ENCODE measurements at regions of chr22 and their contacts with region 1.

Region 1: GRCh38 chr22:40346178-40347118 is at the start of gene ADSL:
- DNase-seq: peak; percentile 46
- H3K4me3 ChIP-seq: peak within 1 kb of the TSS; percentile 50 to 85 (median 66)
- H3K27ac ChIP-seq: peak within 1 kb of the TSS; percentile 79 to 92 (median 87)
- H3K4me1 ChIP-seq: peaks cover 15 to 36% (median 20%) of the 10 kb centered on the region in 3 donors
- H3K27me3 ChIP-seq: no peaks in the 10 kb centered on the region
- CTCF ChIP-seq: peak in 3 of 6 experiments; percentile 13 to 23 (median 16)
- POLR2A ChIP-seq: peak in 3 of 4 donors; percentile 5 to 83 (median 82)
- total RNA-seq, gene ADSL: 32.0 to 98.1 (median 77.8) TPM

Region 2: DNA sequence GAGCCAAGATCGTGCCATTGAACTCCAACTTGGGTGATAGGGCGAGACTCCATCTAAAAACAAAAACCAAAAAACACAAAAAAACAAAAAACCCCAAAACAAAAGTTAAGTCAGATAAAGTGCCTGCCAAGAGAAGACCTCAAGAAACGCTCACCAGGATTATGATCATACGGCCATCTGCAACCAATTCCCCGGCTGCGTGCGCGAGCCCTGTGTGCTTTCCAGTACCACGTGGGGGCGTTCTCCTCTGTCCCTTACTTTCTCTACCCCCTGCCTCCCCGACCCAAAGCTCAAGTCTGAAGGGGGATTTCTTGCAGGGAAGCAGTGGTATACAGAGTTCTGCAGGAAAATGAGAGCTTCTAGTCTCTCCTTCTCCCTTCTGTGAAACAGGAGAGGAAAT is 803.4 kb before region 1 on chr22:
- intact Hi-C with region 1: loop called (anchors 10 kb)
- DNase-seq: no peak
- H3K4me3 ChIP-seq: no peak overlapping the region
- H3K27ac ChIP-seq: no peak overlapping the region
- H3K4me1 ChIP-seq: no peaks in the 10 kb centered on the region
- H3K27me3 ChIP-seq: peaks cover 0 to 62% (median 0%) of the 10 kb centered on the region in 4 donors
- CTCF ChIP-seq: peak in 3 of 6 experiments; percentile 15 to 29 (median 29)
- POLR2A ChIP-seq: no peak

Region 3: DNA sequence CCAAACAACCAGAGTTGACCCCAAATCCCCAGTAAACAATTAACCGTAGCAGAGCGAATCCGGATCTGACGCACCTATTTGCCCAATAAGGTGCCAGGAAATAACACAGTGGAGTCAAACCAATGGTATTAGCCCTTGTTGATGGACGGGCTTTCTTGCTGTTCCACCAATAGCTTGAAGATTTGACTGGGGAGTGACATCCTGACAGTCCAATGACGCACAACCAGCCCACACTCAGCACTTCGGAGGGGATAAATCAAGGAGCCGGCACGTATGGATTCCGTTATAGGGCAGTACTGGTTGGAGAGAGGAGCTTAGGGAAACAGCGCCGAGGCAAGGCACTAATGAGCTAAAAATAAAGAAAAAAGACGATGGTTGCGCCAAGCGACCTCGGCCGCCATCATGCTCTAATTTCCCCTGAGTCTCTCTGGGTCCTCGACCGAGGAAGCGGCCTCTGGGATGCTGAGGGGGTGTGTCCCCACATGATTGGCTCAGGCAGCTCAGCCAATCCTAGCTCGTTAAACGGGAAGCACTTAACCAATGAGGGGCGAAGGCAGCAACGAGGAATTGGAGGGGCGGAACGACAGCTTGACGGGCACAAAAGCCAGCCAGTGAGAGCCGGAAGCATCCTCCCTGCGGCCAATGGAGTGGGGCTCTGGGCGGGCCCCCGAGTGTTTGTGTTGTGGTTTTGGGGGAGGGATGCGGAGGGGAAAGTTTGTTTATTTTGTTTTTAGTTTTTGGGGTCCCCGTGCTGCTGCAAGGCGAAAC is 302.2 kb before region 1 on chr22:
- intact Hi-C with region 1: loop called (anchors 5 kb)
- DNase-seq: peak; percentile 93
- H3K4me3 ChIP-seq: peak overlapping the region; percentile 67 to 87 (median 84)
- H3K27ac ChIP-seq: peak overlapping the region; percentile 87 to 98 (median 96)
- H3K4me1 ChIP-seq: peaks cover 30 to 75% (median 48%) of the 10 kb centered on the region in 3 donors
- H3K27me3 ChIP-seq: no peaks in the 10 kb centered on the region
- CTCF ChIP-seq: peak in 1 of 6 experiments; percentile 5
- POLR2A ChIP-seq: peak in 3 of 4 donors; percentile 40 to 78 (median 73)

Region 4: DNA sequence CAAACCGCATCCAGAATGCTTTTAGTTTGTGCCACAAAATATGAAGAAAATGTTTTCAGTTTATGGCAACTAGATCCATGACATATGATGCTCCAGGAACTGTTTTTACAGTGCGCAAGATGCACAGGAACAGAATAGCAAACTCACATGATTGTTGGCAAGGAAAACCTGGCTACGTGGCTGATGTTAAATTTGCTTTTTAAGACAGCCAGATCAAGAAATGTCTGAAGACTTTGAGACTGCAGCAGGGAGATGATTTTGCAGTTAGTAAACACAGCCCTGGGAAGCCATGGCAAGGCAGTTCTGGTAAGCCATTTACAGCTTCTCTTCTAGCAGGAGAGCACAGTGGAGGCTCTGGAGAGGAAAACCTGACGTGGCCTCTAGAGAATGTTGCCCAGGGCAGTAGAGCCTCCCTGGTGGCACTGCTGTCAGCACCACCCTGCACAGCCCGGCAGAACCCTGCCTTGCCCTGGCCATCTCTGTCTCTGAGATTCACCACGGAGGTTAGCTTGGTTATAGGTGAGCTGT is 238.5 kb before region 1 on chr22:
- intact Hi-C with region 1: no loop called
- DNase-seq: no peak
- H3K4me3 ChIP-seq: peak overlapping the region in 3 of 4 donors; percentile 25 to 49 (median 27)
- H3K27ac ChIP-seq: peak overlapping the region in 3 of 4 donors; percentile 25 to 62 (median 55)
- H3K4me1 ChIP-seq: peaks cover 5 to 31% (median 14%) of the 10 kb centered on the region in 3 donors
- H3K27me3 ChIP-seq: no peaks in the 10 kb centered on the region
- CTCF ChIP-seq: no peak
- POLR2A ChIP-seq: no peak

Region 5: GRCh38 chr22:40238425-40239344 is 107.8 kb before region 1 on chr22:
- intact Hi-C with region 1: no loop called
- DNase-seq: no peak
- H3K4me3 ChIP-seq: peak overlapping the region in 1 of 4 donors; percentile 1
- H3K27ac ChIP-seq: peak overlapping the region; percentile 51 to 72 (median 67)
- H3K4me1 ChIP-seq: peaks cover 26 to 73% (median 27%) of the 10 kb centered on the region in 3 donors
- H3K27me3 ChIP-seq: no peaks in the 10 kb centered on the region
- CTCF ChIP-seq: no peak
- POLR2A ChIP-seq: no peak

Measured in esophagus squamous epithelium (tissue), 5 donors.